PC-3 (cell line): ENCODE measurements at regions of chr3 and their contacts with region 1.

Region 1: DNA sequence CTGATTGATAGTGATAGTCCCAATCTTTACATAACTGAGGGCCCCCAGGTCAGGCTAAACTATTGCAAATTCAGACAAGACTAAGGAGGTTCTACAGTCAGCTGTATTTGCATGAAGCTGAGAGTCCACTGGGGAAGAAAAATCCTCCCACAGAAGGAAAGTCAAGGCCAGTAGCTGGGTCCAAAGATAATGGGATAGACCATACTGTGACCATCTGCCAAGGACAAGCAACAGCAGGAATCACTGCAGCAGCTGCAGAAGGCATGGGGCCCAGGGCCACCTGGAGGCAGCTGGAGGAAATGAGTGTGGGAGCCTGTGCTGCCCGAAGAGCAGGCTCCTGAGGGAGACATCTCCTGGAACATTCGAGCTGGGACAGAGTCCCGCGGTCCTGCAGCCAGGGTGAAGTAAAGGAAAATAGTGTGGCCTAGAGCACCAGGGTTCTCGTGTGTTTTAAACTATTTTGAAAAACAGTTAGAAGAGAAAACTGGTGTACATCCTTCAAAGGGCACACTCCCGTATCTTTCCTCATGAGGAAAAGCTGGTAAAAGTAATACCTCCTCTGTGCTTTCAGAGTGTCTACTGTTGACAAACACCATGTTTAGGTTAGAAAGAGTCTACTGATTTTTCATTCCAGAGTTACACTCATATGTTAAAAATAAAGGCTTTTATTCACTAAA is 13.2 kb upstream of the TMEM212 start:
- DNase-seq: peak; percentile 79
- ATAC-seq: peak; percentile 65
- H3K4me3 ChIP-seq: no peak overlapping the region
- H3K27ac ChIP-seq: peak overlapping the region; percentile 33
- H3K4me1 ChIP-seq: peaks cover 45% of the 10 kb centered on the region
- H3K27me3 ChIP-seq: no peaks in the 10 kb centered on the region
- CTCF ChIP-seq: peak; percentile 89

Region 2: GRCh38 chr3:171646357-171647133 is 183.4 kb before region 1 on chr3:
- CTCF ChIA-PET with region 1: no interaction called
- POLR2A ChIA-PET with region 1: no interaction called
- intact Hi-C with region 1: loop called (anchors 1 kb)
- DNase-seq: peak; percentile 69
- ATAC-seq: peak; percentile 40
- H3K4me3 ChIP-seq: no peak overlapping the region
- H3K27ac ChIP-seq: no peak overlapping the region
- H3K4me1 ChIP-seq: no peaks in the 10 kb centered on the region
- H3K27me3 ChIP-seq: no peaks in the 10 kb centered on the region
- CTCF ChIP-seq: peak; percentile 81

Region 3: GRCh38 chr3:171703756-171704401 is 126.1 kb before region 1 on chr3:
- CTCF ChIA-PET with region 1: interaction called, 3 read pairs
- POLR2A ChIA-PET with region 1: no interaction called
- intact Hi-C with region 1: loop called (anchors 1 kb)
- DNase-seq: peak; percentile 76
- ATAC-seq: peak; percentile 96
- H3K4me3 ChIP-seq: no peak overlapping the region
- H3K27ac ChIP-seq: no peak overlapping the region
- H3K4me1 ChIP-seq: no peaks in the 10 kb centered on the region
- H3K27me3 ChIP-seq: no peaks in the 10 kb centered on the region
- CTCF ChIP-seq: peak; percentile 89

Region 4: GRCh38 chr3:171772427-171773056 is 57.4 kb before region 1 on chr3:
- CTCF ChIA-PET with region 1: interaction called, 40 read pairs
- POLR2A ChIA-PET with region 1: interaction called, 7 read pairs
- intact Hi-C with region 1: loop called (anchors 1 kb)
- DNase-seq: peak; percentile 74
- ATAC-seq: peak; percentile 45
- H3K4me3 ChIP-seq: no peak overlapping the region
- H3K27ac ChIP-seq: no peak overlapping the region
- H3K4me1 ChIP-seq: peaks cover 20% of the 10 kb centered on the region
- H3K27me3 ChIP-seq: no peaks in the 10 kb centered on the region
- CTCF ChIP-seq: peak; percentile 91

Region 5: GRCh38 chr3:171788546-171789351 is 41.2 kb before region 1 on chr3:
- CTCF ChIA-PET with region 1: interaction called, 5 read pairs
- POLR2A ChIA-PET with region 1: interaction called, 3 read pairs
- intact Hi-C with region 1: loop called (anchors 1 kb)
- DNase-seq: peak; percentile 87
- ATAC-seq: peak; percentile 70
- H3K4me3 ChIP-seq: no peak overlapping the region
- H3K27ac ChIP-seq: peak overlapping the region; percentile 90
- H3K4me1 ChIP-seq: peaks cover 53% of the 10 kb centered on the region
- H3K27me3 ChIP-seq: no peaks in the 10 kb centered on the region
- CTCF ChIP-seq: peak; percentile 43

Region 6: GRCh38 chr3:171809821-171810628 is 20.0 kb before region 1 on chr3 and contains the start of gene PLD1:
- CTCF ChIA-PET with region 1: interaction called, 4 read pairs
- POLR2A ChIA-PET with region 1: interaction called, 6 read pairs
- intact Hi-C with region 1: loop called (anchors 1 kb)
- DNase-seq: peak; percentile 80
- ATAC-seq: peak; percentile 59
- H3K4me3 ChIP-seq: peak within 1 kb of the TSS; percentile 78
- H3K27ac ChIP-seq: peak within 1 kb of the TSS; percentile 90
- H3K4me1 ChIP-seq: peaks cover 50% of the 10 kb centered on the region
- H3K27me3 ChIP-seq: no peaks in the 10 kb centered on the region
- CTCF ChIP-seq: no peak
- total RNA-seq, gene PLD1: 7.3 and 8.3 TPM in 2 replicates

Region 7: DNA sequence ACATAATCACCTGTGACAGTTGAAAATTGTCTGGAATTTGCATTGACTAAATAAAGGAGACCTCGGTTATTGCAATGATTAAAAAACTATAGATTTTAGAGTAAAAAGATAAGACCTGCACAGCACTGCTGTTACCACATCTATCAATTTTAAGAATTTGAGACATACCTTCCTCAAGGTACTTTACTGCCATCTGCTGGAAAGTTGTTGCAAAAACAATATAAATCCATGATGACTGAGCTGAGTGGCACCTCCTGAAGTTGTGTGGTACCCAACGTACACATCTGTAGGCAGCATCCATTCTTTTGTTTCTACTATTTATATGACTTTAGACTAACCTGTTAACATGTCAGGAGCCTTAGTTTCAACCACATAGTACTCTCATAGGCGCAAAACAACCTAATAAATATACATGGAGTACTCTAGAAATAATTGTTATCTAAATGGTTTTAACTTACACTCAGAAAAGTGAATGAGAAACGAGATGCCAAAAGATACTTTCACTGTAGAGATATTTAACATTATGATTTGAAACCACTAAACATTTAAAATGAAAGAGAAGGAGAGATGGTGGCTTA is 511.6 kb after region 1 on chr3:
- CTCF ChIA-PET with region 1: no interaction called
- POLR2A ChIA-PET with region 1: no interaction called
- intact Hi-C with region 1: loop called (anchors 5 kb)
- DNase-seq: peak; percentile 89
- ATAC-seq: peak; percentile 84
- H3K4me3 ChIP-seq: no peak overlapping the region
- H3K27ac ChIP-seq: no peak overlapping the region
- H3K4me1 ChIP-seq: no peaks in the 10 kb centered on the region
- H3K27me3 ChIP-seq: no peaks in the 10 kb centered on the region
- CTCF ChIP-seq: peak; percentile 84